ENCODE measurements at regions of chr11 and their contacts with region 1.

Region 1: GRCh38 chr11:2498750-2499149 is 53.9 kb downstream of the KCNQ1 start:
- DNase-seq: no peak
- H3K4me3 ChIP-seq: no peak overlapping the region
- H3K27ac ChIP-seq: no peak overlapping the region
- H3K4me1 ChIP-seq: no peaks in the 10 kb centered on the region
- H3K27me3 ChIP-seq: peaks cover 2% of the 10 kb centered on the region
- CTCF ChIP-seq: no peak

Region 2: DNA sequence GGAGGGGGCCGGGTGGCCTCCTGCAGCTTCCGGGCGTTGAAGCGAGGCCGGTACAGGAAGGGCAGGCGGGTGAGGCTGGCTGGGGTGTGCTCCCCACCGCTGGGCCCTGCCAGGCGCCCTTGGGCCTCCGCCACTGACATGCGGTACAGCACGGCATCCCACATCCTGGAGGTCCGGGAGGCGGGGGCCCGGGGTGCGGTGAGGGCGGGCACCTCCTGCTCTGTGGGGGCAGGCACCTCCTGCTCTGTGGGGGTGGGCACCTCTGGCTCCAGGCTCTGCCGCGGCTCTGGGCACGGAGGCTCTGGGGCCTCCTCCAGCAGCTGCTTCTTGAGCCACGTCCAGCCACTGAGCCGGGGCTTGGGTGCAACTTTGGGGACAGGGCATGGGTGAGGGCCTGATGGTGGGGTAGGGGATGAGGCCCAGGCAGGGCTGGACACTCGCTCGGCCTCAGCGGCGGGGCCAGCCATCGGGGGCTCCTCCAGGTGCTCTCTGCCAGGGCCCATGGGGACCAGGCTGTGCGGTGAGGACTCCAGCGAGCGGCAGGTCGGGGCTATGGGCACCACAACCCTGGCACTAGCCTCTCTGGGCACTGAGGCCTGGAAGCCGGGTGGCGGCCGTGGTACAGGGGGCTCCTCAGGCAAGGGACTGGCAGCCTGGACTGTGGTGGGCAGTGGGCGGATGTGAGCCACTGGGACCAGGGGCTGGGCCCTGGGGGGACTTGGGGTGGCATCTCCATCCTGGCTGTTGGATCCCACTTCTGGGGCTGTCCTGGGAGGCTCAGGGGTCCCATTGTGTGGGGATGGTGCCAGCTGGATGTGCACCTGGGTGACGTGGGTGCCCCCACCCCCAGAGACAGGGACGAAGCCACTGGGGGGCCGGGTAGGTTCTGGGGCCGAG is 609.3 kb before region 1 on chr11:
- CTCF ChIA-PET with region 1: no interaction called
- dilution Hi-C with region 1: loop called (anchors 10 kb)
- in situ Hi-C with region 1: no loop called
- intact Hi-C with region 1: no loop called
- DNase-seq: no peak
- H3K4me3 ChIP-seq: no peak overlapping the region
- H3K27ac ChIP-seq: no peak overlapping the region
- H3K4me1 ChIP-seq: no peaks in the 10 kb centered on the region
- H3K27me3 ChIP-seq: no peaks in the 10 kb centered on the region
- CTCF ChIP-seq: no peak

Region 3: GRCh38 chr11:2178906-2179494 is 319.8 kb before region 1 on chr11:
- CTCF ChIA-PET with region 1: no interaction called
- dilution Hi-C with region 1: loop called (anchors 5 kb)
- in situ Hi-C with region 1: no loop called
- intact Hi-C with region 1: no loop called
- DNase-seq: peak; percentile 82
- H3K4me3 ChIP-seq: no peak overlapping the region
- H3K27ac ChIP-seq: no peak overlapping the region
- H3K4me1 ChIP-seq: peaks cover 40% of the 10 kb centered on the region
- H3K27me3 ChIP-seq: no peaks in the 10 kb centered on the region
- CTCF ChIP-seq: no peak

Region 4: DNA sequence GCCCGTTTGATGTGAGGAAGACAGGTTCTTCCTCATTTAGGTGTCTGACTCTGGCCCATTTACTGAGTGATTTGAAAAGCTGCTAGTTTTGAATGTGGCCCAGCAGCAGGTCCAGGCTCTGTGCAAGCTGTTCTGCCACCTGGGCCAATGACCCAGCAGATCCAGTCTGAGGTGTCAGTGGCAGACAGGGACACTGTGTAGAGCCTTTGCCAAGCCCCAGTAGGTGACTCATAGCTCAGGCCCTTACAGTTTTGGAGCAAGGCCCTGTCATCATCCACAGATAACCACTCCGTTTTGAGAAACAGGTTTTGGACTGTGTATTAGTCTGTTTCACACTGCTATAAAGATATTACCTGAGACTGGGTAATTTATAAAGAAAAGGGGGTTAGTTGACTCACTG is 173.0 kb before region 1 on chr11:
- CTCF ChIA-PET with region 1: no interaction called
- dilution Hi-C with region 1: loop called (anchors 10 kb)
- in situ Hi-C with region 1: no loop called
- intact Hi-C with region 1: no loop called
- DNase-seq: peak; percentile 61
- H3K4me3 ChIP-seq: no peak overlapping the region
- H3K27ac ChIP-seq: no peak overlapping the region
- H3K4me1 ChIP-seq: peaks cover 5% of the 10 kb centered on the region
- H3K27me3 ChIP-seq: no peaks in the 10 kb centered on the region
- CTCF ChIP-seq: no peak

Region 5: GRCh38 chr11:2428322-2428795 is 70.4 kb before region 1 on chr11:
- CTCF ChIA-PET with region 1: no interaction called
- dilution Hi-C with region 1: loop called (anchors 10 kb)
- in situ Hi-C with region 1: no loop called
- intact Hi-C with region 1: no loop called
- DNase-seq: peak; percentile 19
- H3K4me3 ChIP-seq: no peak overlapping the region
- H3K27ac ChIP-seq: no peak overlapping the region
- H3K4me1 ChIP-seq: no peaks in the 10 kb centered on the region
- H3K27me3 ChIP-seq: no peaks in the 10 kb centered on the region
- CTCF ChIP-seq: peak; percentile 71 to 99

Region 6: DNA sequence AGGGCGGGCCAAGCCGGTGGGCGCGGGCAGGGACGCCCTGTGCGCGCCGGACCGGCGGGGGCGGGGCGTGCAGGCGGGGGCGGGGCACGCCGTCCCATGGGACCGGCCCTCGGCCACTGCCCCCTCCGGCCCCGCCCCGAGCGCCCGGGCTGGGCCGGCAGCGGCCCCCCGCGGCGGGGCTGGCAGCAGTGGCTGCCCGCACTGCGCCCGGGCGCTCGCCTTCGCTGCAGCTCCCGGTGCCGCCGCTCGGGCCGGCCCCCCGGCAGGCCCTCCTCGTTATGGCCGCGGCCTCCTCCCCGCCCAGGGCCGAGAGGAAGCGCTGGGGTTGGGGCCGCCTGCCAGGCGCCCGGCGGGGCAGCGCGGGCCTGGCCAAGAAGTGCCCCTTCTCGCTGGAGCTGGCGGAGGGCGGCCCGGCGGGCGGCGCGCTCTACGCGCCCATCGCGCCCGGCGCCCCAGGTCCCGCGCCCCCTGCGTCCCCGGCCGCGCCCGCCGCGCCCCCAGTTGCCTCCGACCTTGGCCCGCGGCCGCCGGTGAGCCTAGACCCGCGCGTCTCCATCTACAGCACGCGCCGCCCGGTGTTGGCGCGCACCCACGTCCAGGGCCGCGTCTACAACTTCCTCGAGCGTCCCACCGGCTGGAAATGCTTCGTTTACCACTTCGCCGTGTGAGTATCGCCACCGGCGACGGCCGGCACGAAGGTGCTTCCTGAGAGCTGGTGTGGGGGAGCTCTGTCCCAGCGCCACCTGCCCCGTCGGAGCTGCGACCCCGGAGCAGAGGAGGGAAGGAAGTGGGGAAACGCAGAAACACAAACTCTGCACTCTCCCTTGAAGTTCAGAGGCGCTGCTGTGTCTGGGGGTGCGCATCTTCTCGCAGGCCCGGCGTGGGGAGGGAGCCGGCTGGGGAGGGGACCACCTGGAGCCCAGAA is 53.7 kb before region 1 on chr11 and contains the start of gene KCNQ1:
- CTCF ChIA-PET with region 1: no interaction called
- dilution Hi-C with region 1: no loop called
- in situ Hi-C with region 1: no loop called
- intact Hi-C with region 1: no loop called
- DNase-seq: no peak
- H3K4me3 ChIP-seq: no peak within 1 kb of the TSS
- H3K27ac ChIP-seq: no peak within 1 kb of the TSS
- H3K4me1 ChIP-seq: peaks cover 3% of the 10 kb centered on the region
- H3K27me3 ChIP-seq: peaks cover 16% of the 10 kb centered on the region
- CTCF ChIP-seq: no peak
- total RNA-seq, gene KCNQ1: 0.83 TPM in 1 of 2 donors, not detected in the other

Measured in mammary epithelial cell (primary cell).